Activated B cell treated with CpG ODN at 0.5 μM for 24 hours (primary cell): ENCODE measurements at regions of chr17 and their contacts with region 1.

Region 1: DNA sequence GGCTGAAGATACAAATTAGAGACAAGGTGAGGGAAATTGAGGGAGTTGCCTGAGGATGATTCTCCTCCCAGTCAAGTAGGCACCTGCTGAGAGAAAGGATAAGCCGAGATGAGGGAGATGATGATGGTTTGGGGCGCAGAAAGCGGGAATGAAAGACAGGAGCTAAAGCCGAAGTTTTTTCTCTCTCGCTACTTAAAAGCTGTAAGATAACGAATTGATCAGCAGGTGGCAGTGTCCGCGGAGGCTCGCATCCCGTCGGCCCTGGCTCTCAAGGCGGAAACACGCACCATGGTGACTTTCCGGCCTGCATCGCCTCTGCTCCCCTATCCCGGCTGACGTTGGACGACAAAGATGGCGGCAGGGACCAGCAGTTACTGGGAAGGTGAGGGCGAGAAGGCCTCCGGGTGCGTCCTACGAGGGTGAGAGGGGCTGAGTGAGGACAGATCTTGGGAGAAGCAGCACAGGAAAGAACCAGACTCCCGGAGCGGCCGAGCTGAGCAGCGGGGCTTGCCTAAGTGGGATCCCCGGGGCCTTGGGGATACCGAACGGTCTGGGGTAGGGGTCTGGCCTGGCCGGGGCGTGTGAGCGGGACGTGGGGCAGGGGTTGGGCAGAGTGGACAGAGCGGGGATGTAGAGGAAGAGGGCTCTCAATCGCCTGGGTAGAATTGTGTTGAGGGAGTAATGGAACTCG is at the start of gene GOSR1:
- DNase-seq: peak; percentile 79
- ATAC-seq: peak; percentile 99
- H3K4me3 Mint-ChIP-seq: peak within 1 kb of the TSS; percentile 97
- H3K27ac Mint-ChIP-seq: peak within 1 kb of the TSS; percentile 97
- H3K4me1 Mint-ChIP-seq: peaks cover 30% of the 10 kb centered on the region
- H3K27me3 Mint-ChIP-seq: no peaks in the 10 kb centered on the region
- CTCF ChIP-seq: no peak
- total RNA-seq, gene GOSR1: 59.9 and 60.7 TPM in 2 replicates

Region 2: DNA sequence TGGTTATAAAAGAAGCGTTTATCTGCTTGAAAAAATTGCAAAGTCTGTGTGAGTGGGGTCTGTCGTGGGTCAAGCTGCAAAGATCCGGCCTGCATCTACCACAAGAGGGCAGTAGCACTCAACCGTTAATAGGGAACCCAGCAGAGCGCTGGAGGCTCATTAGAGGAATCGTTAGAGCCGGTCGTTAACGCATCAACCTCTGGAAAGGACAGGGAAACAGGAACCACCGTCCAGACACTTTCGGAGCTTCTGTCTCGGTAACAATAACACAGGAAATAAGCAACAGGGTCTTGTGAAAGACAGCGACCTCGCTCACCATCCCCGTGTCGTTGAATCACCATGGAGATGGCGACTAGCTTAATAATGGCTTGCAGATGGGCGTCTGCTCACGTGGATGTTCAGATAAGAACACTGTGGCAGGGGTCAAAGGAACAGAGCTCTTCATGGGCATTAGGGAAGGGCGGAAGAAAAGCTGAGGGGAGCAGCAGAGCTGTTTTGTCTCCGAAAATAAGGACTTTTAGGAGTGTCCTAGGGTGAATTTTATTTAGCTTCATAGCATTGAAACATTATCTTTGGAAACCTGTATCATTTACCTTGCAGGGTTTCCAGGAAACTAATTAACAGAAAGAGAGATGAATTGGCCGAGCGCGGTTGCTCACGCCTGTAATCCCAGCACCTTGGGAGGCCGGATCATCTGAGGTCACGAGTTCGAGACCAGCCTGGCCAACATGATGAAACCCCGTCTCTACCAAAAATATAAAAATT is 372.5 kb before region 1 on chr17:
- CTCF ChIA-PET with region 1: interaction called, 3 read pairs
- POLR2A ChIA-PET with region 1: no interaction called
- intact Hi-C with region 1: loop called (anchors 10 kb)
- DNase-seq: peak; percentile 37
- ATAC-seq: peak; percentile 95
- H3K4me3 Mint-ChIP-seq: peak overlapping the region; percentile 86
- H3K27ac Mint-ChIP-seq: peak overlapping the region; percentile 37
- H3K4me1 Mint-ChIP-seq: peaks cover 10% of the 10 kb centered on the region
- H3K27me3 Mint-ChIP-seq: peaks cover 5% of the 10 kb centered on the region
- CTCF ChIP-seq: peak; percentile 65

Region 3: DNA sequence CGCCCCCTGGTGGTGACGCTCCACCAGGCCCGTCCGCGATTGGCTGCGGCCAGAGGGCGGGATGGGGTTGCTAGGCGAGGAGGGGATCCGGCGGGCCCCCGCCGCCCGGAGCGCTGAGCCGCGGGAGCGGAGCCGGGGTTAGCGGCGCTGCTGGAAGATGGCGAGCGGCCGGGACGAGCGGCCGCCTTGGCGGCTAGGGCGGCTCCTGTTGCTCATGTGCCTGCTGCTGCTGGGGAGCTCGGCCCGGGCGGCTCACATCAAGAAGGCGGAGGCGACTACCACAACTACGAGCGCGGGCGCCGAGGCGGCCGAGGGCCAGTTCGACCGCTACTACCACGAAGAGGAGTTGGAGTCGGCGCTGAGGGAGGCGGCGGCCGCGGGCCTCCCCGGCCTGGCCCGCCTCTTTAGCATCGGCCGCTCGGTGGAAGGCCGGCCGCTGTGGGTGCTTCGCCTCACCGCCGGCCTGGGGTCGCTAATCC is 98.4 kb before region 1 on chr17 and contains the start of gene CPD:
- CTCF ChIA-PET with region 1: no interaction called
- POLR2A ChIA-PET with region 1: no interaction called
- intact Hi-C with region 1: loop called (anchors 2 kb)
- DNase-seq: peak; percentile 97
- ATAC-seq: peak; percentile 97
- H3K4me3 Mint-ChIP-seq: peak within 1 kb of the TSS; percentile 84
- H3K27ac Mint-ChIP-seq: peak within 1 kb of the TSS; percentile 67
- H3K4me1 Mint-ChIP-seq: peaks cover 29% of the 10 kb centered on the region
- H3K27me3 Mint-ChIP-seq: peaks cover 38% of the 10 kb centered on the region
- CTCF ChIP-seq: no peak
- total RNA-seq, gene CPD: 8.2 and 8.6 TPM in 2 replicates

Region 4: DNA sequence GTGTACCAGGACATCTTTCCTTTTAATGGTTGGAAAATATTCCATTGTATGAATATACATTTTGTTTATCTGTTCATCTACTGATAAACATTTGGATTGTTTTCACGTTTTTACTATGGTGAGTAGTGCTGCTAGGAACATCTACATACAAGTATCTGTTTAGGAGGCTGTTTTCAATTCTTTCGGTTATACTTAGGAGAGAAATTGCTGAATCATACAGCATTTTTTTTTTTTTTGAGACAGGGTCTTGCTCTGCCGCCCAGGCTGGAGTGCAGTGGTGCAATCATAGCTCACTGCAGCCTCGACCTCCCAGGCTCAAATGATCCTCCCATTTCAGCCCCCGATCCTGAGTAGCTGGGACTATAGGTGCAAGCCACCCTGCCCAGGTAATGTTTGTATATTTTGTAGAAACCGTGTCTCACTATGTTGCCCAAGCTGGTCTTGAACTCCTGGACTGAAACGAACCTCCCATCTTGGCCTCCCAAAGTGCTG is 224.3 kb after region 1 on chr17:
- CTCF ChIA-PET with region 1: interaction called, 3 read pairs
- POLR2A ChIA-PET with region 1: no interaction called
- intact Hi-C with region 1: loop called (anchors 1 kb)
- DNase-seq: no peak
- ATAC-seq: no peak
- H3K4me3 Mint-ChIP-seq: no peak overlapping the region
- H3K27ac Mint-ChIP-seq: no peak overlapping the region
- H3K4me1 Mint-ChIP-seq: peaks cover 12% of the 10 kb centered on the region
- H3K27me3 Mint-ChIP-seq: peaks cover 27% of the 10 kb centered on the region
- CTCF ChIP-seq: no peak

Region 5: GRCh38 chr17:30824356-30825145 is 347.3 kb after region 1 on chr17 and contains the start of gene CRLF3:
- CTCF ChIA-PET with region 1: interaction called, 3 read pairs
- POLR2A ChIA-PET with region 1: interaction called, 5 read pairs
- intact Hi-C with region 1: loop called (anchors 1 kb)
- DNase-seq: peak; percentile 89
- ATAC-seq: peak; percentile 93
- H3K4me3 Mint-ChIP-seq: peak within 1 kb of the TSS; percentile 93
- H3K27ac Mint-ChIP-seq: peak within 1 kb of the TSS; percentile 88
- H3K4me1 Mint-ChIP-seq: peaks cover 48% of the 10 kb centered on the region
- H3K27me3 Mint-ChIP-seq: no peaks in the 10 kb centered on the region
- CTCF ChIP-seq: no peak
- total RNA-seq, gene CRLF3: 53.5 and 54.9 TPM in 2 replicates

Region 6: GRCh38 chr17:31216053-31216751 is 739.0 kb after region 1 on chr17:
- CTCF ChIA-PET with region 1: interaction called, 3 read pairs
- POLR2A ChIA-PET with region 1: no interaction called
- intact Hi-C with region 1: loop called (anchors 1 kb)
- DNase-seq: no peak
- ATAC-seq: no peak
- H3K4me3 Mint-ChIP-seq: no peak overlapping the region
- H3K27ac Mint-ChIP-seq: no peak overlapping the region
- H3K4me1 Mint-ChIP-seq: no peaks in the 10 kb centered on the region
- H3K27me3 Mint-ChIP-seq: no peaks in the 10 kb centered on the region
- CTCF ChIP-seq: peak; percentile 72